ENCODE measurements at regions of chr3 and their contacts with region 1.

Region 1: GRCh38 chr3:122564155-122564912 is at the starts of genes DTX3L and PARP9:
- DNase-seq: peak; percentile 91
- ATAC-seq: peak; percentile 95
- H3K4me3 Mint-ChIP-seq: peak within 1 kb of the TSS; percentile 98
- H3K27ac Mint-ChIP-seq: peak within 1 kb of the TSS; percentile 99
- H3K4me1 Mint-ChIP-seq: peaks cover 68% of the 10 kb centered on the region
- H3K27me3 Mint-ChIP-seq: no peaks in the 10 kb centered on the region
- total RNA-seq, gene DTX3L: 124 to 127 TPM
- total RNA-seq, gene PARP9: 115 to 118 TPM

Region 2: DNA sequence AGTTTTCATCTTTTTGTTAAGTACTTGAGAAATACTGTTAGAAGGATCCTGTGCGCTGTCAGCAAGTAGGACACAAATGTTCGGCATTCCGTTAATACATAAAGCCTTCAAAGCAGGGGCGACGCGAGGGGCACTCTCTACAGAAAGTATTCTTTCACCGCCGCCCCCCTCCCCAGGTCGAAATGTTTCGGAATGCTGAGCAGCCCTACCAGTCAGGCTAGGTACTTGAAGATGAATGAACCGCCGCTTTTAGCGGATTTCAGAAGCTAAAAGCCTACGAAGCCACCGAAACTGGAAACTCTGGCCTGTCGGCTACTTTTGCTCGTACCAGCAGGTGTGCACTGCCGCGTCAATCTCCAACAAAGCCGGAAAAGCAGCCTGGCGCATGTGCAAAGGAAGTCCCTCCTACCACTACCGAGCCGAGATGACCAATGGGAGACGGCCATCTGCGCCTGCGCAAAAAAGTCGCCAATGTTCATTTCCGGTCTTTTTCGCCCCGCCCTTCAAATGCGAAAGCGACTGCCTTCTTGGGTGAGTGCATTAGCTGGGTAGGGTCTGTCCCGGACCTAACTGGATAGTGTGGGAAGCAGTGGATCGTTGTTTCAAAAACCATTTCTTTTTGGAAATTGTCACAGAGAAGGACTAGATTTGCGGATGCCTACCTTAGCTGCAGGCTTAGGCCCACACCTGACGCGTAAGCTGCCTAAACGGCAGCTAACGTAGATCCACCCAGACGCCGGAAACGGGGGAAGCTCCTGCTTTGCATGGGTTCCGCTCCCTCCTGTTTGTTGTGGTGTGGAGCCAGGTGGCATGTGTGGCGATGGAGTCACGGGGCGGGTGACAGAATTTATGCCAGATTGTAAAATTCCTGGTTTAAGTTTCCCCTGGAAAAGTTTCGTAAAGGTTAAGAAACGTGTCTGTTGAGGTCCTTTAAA is 148.3 kb before region 1 on chr3 and contains the start of gene WDR5B:
- CTCF ChIA-PET with region 1: interaction called, 3 read pairs
- POLR2A ChIA-PET with region 1: interaction called, 13 read pairs
- DNase-seq: peak; percentile 99
- ATAC-seq: peak; percentile 94
- H3K4me3 Mint-ChIP-seq: peak within 1 kb of the TSS; percentile 96
- H3K27ac Mint-ChIP-seq: peak within 1 kb of the TSS; percentile 99
- H3K4me1 Mint-ChIP-seq: peaks cover 51% of the 10 kb centered on the region
- H3K27me3 Mint-ChIP-seq: no peaks in the 10 kb centered on the region
- total RNA-seq, gene WDR5B: 4.5 to 5.1 TPM

Region 3: GRCh38 chr3:122662505-122662904 is 98.2 kb after region 1 on chr3:
- CTCF ChIA-PET with region 1: no interaction called
- POLR2A ChIA-PET with region 1: no interaction called
- DNase-seq: no peak
- ATAC-seq: no peak
- H3K4me3 Mint-ChIP-seq: no peak overlapping the region
- H3K27ac Mint-ChIP-seq: no peak overlapping the region
- H3K4me1 Mint-ChIP-seq: peaks cover 2% of the 10 kb centered on the region
- H3K27me3 Mint-ChIP-seq: peaks cover 27% of the 10 kb centered on the region

Region 4: GRCh38 chr3:122697952-122698620 is 133.8 kb after region 1 on chr3:
- CTCF ChIA-PET with region 1: interaction called, 16 read pairs
- POLR2A ChIA-PET with region 1: no interaction called
- DNase-seq: no peak
- ATAC-seq: no peak
- H3K4me3 Mint-ChIP-seq: no peak overlapping the region
- H3K27ac Mint-ChIP-seq: no peak overlapping the region
- H3K4me1 Mint-ChIP-seq: peaks cover 13% of the 10 kb centered on the region
- H3K27me3 Mint-ChIP-seq: no peaks in the 10 kb centered on the region

Measured in activated CD8-positive, alpha-beta T cell treated with anti-CD3 and anti-CD28 coated beads, Interleukin-2, amount 10 ng/mL, durations not matched to agents 7 days and 5 days (primary cell).